OCI-LY7 (cell line): ENCODE measurements at regions of chr13 and their contacts with region 1.

Region 1: DNA sequence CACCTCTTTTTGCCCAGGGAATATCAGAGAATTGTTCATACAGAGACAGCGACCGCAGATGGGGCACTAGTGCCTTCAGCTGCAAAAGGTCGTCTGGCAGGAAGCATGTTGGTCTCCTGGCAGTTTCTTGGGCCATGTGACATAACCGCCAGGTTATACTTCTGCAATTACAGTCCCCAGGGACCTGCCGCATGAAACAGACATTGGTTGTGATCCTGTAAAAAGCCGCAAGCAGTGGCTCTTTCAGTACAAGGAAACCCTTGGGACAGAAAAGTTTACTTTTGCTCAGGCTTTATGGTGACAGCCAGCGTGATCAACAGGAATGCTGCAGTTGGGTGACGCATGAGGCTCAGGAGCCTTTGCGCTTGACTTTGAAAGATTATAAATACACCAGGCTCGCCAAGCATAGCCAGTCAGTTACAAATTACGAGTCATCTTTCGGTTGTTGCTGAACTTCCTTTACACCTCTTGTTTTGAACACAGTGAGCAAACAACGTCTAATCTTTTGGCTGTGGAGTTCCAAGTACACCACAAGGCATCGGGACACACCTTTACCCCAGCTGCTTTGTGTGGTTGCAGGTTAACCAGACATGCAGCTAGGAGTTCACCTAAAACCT is 50.5 kb upstream of the UBE2L5 start:
- DNase-seq: peak; percentile 100
- H3K4me3 ChIP-seq: peak overlapping the region; percentile 80
- H3K27ac ChIP-seq: peak overlapping the region; percentile 97
- H3K4me1 ChIP-seq: peaks cover 65% of the 10 kb centered on the region
- CTCF ChIP-seq: peak; percentile 57

Region 2: DNA sequence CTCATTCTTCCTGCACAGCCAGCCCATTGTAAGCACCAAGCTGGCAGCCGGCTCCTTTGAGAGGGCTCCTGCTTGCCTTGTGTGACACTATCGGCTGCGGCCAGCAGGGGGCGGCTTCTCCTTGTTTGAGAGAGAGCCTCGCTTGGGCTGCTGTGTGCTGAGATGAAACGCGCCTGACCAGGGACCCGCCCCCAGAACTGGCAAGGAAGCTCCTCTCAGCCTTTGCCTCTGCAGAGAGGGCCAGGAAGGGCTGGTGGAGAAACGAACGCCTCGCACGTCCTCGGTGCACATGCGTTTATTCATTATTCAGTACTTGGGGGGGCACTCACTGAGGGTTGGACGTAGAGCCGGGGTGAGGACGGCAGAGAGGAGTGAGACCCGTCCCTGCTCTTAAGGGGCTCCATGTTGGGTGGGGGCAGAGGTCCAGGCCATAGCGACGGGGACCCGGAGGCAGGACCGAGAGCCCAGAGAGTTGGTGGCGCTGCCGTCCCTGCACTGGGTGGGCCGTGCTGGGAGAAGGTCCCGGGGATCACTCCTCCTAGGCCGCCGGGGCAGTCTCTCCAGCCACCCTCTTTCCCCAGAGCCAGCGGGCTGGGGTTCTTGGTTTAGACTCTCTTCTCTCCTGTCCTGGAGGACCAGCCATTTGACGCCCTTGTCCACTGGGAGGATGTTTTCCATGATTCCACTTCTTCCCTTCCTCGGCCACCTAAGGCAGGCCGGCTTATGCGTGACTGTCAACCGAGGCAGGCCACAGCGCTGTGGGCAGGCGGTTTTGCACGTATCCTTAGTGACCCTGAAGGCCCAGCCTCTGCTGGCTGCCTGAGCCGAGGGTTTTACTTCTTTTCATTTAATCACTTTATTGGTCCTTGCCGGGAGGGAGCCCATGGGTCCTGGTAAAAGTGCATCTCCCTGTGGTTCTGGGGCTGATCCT is 238.9 kb before region 1 on chr13:
- CTCF ChIA-PET with region 1: interaction called, 8 read pairs
- POLR2A ChIA-PET with region 1: interaction called, 5 read pairs
- intact Hi-C with region 1: loop called (anchors 1 kb)
- DNase-seq: peak; percentile 93
- H3K4me3 ChIP-seq: no peak overlapping the region
- H3K27ac ChIP-seq: no peak overlapping the region
- H3K4me1 ChIP-seq: peaks cover 10% of the 10 kb centered on the region
- CTCF ChIP-seq: peak; percentile 94

Region 3: DNA sequence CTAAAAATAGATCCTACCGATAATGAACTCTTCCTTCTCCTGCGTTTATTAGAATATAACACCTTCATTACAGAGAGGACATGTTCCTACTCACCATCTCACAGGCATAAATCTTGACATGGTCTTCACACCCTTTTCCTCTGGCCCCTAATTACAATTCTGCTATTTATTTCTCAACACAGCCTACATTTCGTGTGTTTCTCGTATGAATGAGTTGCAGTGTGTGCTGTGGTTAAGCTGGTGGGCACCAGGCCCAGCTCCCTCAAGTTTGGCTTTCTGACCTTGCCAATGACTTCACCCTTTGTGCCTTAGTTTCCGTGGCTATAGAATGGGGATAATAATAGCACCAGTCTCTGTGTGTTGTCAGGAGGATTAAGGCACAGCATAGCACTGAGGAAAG is 52.1 kb before region 1 on chr13:
- CTCF ChIA-PET with region 1: no interaction called
- POLR2A ChIA-PET with region 1: no interaction called
- intact Hi-C with region 1: no loop called
- DNase-seq: no peak
- H3K4me3 ChIP-seq: no peak overlapping the region
- H3K27ac ChIP-seq: no peak overlapping the region
- H3K4me1 ChIP-seq: peaks cover 50% of the 10 kb centered on the region
- CTCF ChIP-seq: no peak

Region 4: DNA sequence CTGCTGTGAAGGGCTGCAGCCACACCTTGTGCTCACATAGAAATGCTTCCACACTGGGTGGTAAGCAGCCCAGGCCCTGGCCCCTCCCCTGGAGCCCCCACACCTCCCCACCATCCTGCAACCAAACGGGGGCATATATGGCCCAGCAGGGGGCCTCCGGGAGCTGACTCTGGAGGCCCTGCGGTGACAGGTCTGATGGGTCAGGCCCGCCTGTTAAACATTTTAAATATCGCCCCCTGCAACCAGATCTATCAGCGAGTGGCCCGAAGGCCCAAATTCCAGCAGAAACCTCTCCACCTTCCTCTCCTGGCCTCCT is 16.4 kb before region 1 on chr13:
- CTCF ChIA-PET with region 1: interaction called, 9 read pairs
- POLR2A ChIA-PET with region 1: interaction called, 29 read pairs
- intact Hi-C with region 1: loop called (anchors 1 kb)
- DNase-seq: peak; percentile 84
- H3K4me3 ChIP-seq: peak overlapping the region; percentile 42
- H3K27ac ChIP-seq: peak overlapping the region; percentile 83
- H3K4me1 ChIP-seq: peaks cover 50% of the 10 kb centered on the region
- CTCF ChIP-seq: peak; percentile 91

Region 5: DNA sequence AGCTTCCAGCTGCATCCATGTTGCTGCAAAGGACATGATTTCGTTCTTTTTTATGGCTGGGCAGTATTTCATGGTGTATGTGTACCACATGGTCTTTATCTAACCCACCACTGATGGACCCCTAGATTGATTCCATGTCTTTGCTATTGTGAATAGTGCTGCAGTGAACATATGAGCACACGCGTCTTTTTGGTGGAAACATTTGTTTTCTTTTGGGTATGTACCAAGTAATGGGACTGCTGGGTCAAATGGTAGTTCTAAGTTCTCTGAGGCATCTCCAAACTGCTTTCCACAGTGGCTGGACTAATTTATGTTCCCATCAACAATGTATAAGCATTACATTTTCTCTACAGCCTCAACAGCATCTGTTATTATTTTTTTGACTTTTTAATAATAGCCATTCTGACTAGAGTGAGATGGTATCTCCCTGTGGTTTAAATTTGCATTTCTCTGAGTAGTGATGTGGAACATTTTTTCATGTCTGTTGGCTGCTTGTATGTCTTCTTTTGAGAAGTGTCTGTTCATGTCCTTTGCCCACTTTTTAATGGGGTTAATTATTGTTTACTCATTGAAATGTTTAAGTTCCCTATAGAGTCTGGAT is 43.8 kb after region 1 on chr13:
- CTCF ChIA-PET with region 1: interaction called, 3 read pairs
- POLR2A ChIA-PET with region 1: interaction called, 99 read pairs
- intact Hi-C with region 1: loop called (anchors 2 kb)
- DNase-seq: peak; percentile 86
- H3K4me3 ChIP-seq: peak overlapping the region; percentile 48
- H3K27ac ChIP-seq: peak overlapping the region; percentile 92
- H3K4me1 ChIP-seq: peaks cover 84% of the 10 kb centered on the region
- CTCF ChIP-seq: no peak

Region 6: DNA sequence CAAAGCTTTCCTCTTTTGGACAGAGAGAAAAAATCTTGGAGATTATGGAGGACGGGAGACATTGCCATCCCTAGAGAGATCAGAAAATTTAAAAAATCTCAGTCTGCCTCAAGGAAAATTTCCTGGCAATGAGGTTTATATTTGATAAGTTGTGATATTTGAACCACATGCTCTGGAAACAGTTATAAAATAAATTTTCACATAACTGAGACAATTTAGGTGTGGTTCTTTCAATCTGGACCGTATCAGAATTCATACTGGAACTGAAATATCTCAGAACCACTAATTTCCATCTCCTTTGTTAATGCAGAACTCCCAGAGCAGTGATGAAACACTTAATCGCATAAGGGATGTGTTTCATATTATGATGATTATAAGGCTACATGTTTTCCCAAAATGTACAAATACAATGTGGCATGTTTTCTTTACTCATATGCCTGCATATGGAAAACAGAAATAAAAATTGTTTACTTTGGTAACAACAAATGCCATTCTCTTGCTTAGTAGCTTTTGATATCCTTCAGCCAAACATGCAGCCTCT is 64.2 kb after region 1 on chr13:
- CTCF ChIA-PET with region 1: interaction called, 17 read pairs
- POLR2A ChIA-PET with region 1: interaction called, 49 read pairs
- intact Hi-C with region 1: no loop called
- DNase-seq: no peak
- H3K4me3 ChIP-seq: no peak overlapping the region
- H3K27ac ChIP-seq: no peak overlapping the region
- H3K4me1 ChIP-seq: peaks cover 66% of the 10 kb centered on the region
- CTCF ChIP-seq: no peak

Region 7: GRCh38 chr13:30617315-30618185 is 245.8 kb after region 1 on chr13 and contains the start of gene USPL1:
- CTCF ChIA-PET with region 1: no interaction called
- POLR2A ChIA-PET with region 1: interaction called, 3 read pairs
- intact Hi-C with region 1: loop called (anchors 2 kb)
- DNase-seq: peak; percentile 99
- H3K4me3 ChIP-seq: peak within 1 kb of the TSS; percentile 73
- H3K27ac ChIP-seq: peak within 1 kb of the TSS; percentile 92
- H3K4me1 ChIP-seq: peaks cover 43% of the 10 kb centered on the region
- CTCF ChIP-seq: peak; percentile 29; the same call in 1 of the 2 replicates
- total RNA-seq, gene USPL1: 19.2 and 21.1 TPM in 2 replicates